Caco-2 (cell line): ENCODE measurements at regions of chr1 and their contacts with region 1.

Region 1: DNA sequence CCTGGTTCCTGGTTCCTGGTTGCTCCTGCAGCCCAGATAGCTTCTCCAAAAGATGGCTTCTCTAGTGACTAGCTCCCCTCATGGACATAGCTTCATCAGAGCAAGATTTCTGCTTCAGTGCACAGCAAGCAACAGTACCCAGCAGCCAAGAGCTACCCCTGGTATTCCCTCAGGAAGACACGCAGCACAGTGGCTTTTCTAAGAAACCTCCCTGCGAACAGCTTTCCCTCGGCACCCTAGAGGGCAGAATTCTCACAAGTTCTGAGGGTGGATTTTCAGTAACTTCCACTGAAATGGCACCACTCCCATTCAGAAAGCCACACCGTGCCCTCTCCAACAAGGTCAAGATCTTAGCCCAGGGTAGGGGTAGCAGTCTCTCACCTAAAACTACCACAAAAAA is 128.2 kb downstream of the EIF4G3 start:
- DNase-seq: no peak
- H3K4me3 ChIP-seq: no peak overlapping the region
- H3K4me3 Mint-ChIP-seq: no peak overlapping the region
- H3K27ac Mint-ChIP-seq: no peak overlapping the region
- H3K4me1 ChIP-seq: no peaks in the 10 kb centered on the region
- H3K4me1 Mint-ChIP-seq: no peaks in the 10 kb centered on the region
- H3K27me3 ChIP-seq: no peaks in the 10 kb centered on the region
- H3K27me3 Mint-ChIP-seq: no peaks in the 10 kb centered on the region
- CTCF ChIP-seq: no peak

Region 2: DNA sequence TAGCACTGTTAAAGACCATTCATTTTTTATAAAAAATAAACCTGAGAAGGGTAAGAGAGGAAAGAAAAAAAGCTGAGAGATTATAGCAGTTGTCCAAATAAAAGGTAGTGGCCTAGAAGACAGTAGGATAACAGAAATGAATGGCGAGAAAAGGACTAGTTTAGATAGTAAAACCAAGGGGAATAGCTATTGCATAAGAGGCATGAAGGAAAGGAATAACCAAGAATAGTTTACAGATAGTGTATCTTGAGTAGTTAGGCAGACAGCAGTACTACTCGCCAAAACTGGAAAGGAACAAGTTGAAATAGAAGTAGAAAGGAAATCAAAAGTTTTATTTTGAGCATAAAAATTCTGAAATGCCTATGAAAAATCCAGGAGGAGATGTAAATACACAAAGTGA is 57.8 kb after region 1 on chr1:
- CTCF ChIA-PET with region 1: no interaction called
- POLR2A ChIA-PET with region 1: interaction called, 10 read pairs
- intact Hi-C with region 1: no loop called
- DNase-seq: no peak
- H3K4me3 ChIP-seq: no peak overlapping the region
- H3K4me3 Mint-ChIP-seq: no peak overlapping the region
- H3K27ac Mint-ChIP-seq: no peak overlapping the region
- H3K4me1 ChIP-seq: no peaks in the 10 kb centered on the region
- H3K4me1 Mint-ChIP-seq: peaks cover 8% of the 10 kb centered on the region
- H3K27me3 ChIP-seq: no peaks in the 10 kb centered on the region
- H3K27me3 Mint-ChIP-seq: no peaks in the 10 kb centered on the region
- CTCF ChIP-seq: no peak